ENCODE measurements at regions of chr17 and their contacts with region 1.

Region 1: DNA sequence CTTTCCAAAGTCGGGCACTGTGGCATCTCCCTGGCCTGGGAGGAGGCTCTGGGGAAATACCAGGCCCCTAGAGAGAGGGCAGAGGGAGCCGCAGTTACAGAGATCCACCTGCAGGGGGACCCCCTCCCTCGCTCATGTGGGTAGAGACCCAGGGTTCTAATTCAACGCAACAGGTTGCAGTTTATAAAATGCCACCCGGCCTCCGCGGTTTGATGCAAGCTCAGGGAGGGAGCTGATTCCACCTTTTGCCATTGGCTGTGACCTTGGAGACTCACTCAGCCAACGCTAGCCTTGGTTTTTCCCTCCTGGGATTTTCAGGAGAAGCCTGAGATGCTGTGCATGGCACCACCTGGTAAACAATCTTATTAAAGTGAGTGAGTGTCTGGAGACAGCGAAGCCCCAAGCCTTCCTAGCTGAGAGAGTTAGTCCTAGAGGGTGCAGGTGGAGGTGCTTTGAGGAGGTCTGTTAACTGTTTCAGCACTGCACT is 12.1 kb downstream of the TTLL6 start:
- DNase-seq: peak; percentile 88
- ATAC-seq: peak; percentile 98
- H3K4me3 ChIP-seq: peak overlapping the region; percentile 22; the same call in 1 of the 2 replicates
- H3K27ac ChIP-seq: no peak overlapping the region
- H3K4me1 ChIP-seq: peaks cover 3% of the 10 kb centered on the region; the same call in 1 of the 2 replicates
- H3K27me3 ChIP-seq: no peaks in the 10 kb centered on the region
- CTCF ChIP-seq: peak; percentile 99

Region 2: GRCh38 chr17:48850792-48851323 is 45.9 kb after region 1 on chr17:
- CTCF ChIA-PET with region 1: no interaction called
- POLR2A ChIA-PET with region 1: interaction called, 11 read pairs
- intact Hi-C with region 1: no loop called
- DNase-seq: no peak
- ATAC-seq: no peak
- H3K4me3 ChIP-seq: no peak overlapping the region
- H3K27ac ChIP-seq: no peak overlapping the region
- H3K4me1 ChIP-seq: no peaks in the 10 kb centered on the region
- H3K27me3 ChIP-seq: no peaks in the 10 kb centered on the region
- CTCF ChIP-seq: no peak

Measured in PC-3 (cell line).